ENCODE measurements at regions of chr5 and their contacts with region 1.

Region 1: GRCh38 chr5:36264202-36264760 is 22.6 kb upstream of the NADK2 start:
- DNase-seq: no peak
- ATAC-seq: no peak
- H3K4me3 Mint-ChIP-seq: no peak overlapping the region
- H3K27ac Mint-ChIP-seq: no peak overlapping the region
- H3K4me1 Mint-ChIP-seq: no peaks in the 10 kb centered on the region
- H3K27me3 Mint-ChIP-seq: peaks cover 12% of the 10 kb centered on the region

Region 2: GRCh38 chr5:36305571-36306326 is 41.5 kb after region 1 on chr5:
- CTCF ChIA-PET with region 1: interaction called, 4 read pairs
- POLR2A ChIA-PET with region 1: no interaction called
- intact Hi-C with region 1: loop called (anchors 1 kb)
- DNase-seq: peak; percentile 54
- ATAC-seq: no peak
- H3K4me3 Mint-ChIP-seq: no peak overlapping the region
- H3K27ac Mint-ChIP-seq: no peak overlapping the region
- H3K4me1 Mint-ChIP-seq: peaks cover 13% of the 10 kb centered on the region
- H3K27me3 Mint-ChIP-seq: peaks cover 4% of the 10 kb centered on the region

Region 3: GRCh38 chr5:36507332-36507952 is 243.2 kb after region 1 on chr5:
- CTCF ChIA-PET with region 1: interaction called, 12 read pairs
- POLR2A ChIA-PET with region 1: no interaction called
- intact Hi-C with region 1: loop called (anchors 1 to 2 kb)
- DNase-seq: peak; percentile 87
- ATAC-seq: no peak
- H3K4me3 Mint-ChIP-seq: no peak overlapping the region
- H3K27ac Mint-ChIP-seq: no peak overlapping the region
- H3K4me1 Mint-ChIP-seq: no peaks in the 10 kb centered on the region
- H3K27me3 Mint-ChIP-seq: peaks cover 7% of the 10 kb centered on the region